AG04449 (cell line): ENCODE measurements at regions of chr7 and their contacts with region 1.

Region 1: GRCh38 chr7:139602143-139602722 is 78.7 kb downstream of the CLEC2L start:
- DNase-seq: peak; percentile 10
- H3K4me3 ChIP-seq: no peak overlapping the region
- CTCF ChIP-seq: peak; percentile 54

Region 2: GRCh38 chr7:139511315-139511714 is 90.9 kb before region 1 on chr7:
- CTCF ChIA-PET with region 1: interaction called, 14 read pairs
- POLR2A ChIA-PET with region 1: no interaction called
- DNase-seq: no peak
- H3K4me3 ChIP-seq: no peak overlapping the region
- CTCF ChIP-seq: no peak

Region 3: GRCh38 chr7:139588632-139589031 is 13.6 kb before region 1 on chr7:
- CTCF ChIA-PET with region 1: interaction called, 141 read pairs
- POLR2A ChIA-PET with region 1: no interaction called
- DNase-seq: peak; percentile 9
- H3K4me3 ChIP-seq: no peak overlapping the region
- CTCF ChIP-seq: no peak

Region 4: DNA sequence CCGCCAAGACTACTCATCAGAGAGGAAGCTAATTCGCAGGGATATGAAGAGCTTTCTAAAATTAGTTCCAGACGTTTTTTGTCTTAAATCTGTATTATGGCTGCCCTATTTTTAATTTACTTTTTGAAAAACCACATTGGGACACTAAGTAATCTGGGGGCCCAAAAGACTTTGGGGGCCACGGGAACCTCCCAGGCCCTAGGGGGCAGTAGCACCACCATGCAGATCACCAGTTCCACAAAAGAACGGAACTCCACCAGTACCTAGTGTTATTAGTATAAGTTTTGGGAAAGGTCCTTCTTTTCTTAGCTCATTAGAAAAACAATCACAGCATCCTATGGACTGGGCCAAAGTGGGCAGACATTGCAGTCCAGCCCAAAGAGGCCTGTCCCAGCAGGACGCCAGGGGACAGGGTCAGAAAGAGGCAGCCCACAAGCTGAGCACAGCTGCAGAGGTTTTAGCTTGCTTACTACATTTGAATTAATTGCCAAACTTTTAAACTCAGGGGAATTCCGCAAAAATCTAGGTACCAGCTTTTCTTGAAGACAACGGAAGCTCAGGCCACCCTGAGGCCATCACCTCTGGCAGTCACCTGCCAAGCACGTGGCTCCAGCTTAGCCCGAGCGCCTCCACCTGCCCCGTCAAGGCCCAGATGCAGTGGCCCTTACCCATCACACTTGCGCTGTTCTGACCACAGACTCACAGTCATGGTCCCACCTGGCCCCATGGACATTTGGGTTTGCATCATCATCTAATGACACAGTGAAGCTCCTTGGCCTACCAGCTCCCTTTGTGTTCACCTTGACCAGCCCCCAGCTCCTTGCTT is 385.7 kb after region 1 on chr7:
- CTCF ChIA-PET with region 1: interaction called, 16 read pairs
- POLR2A ChIA-PET with region 1: no interaction called
- DNase-seq: no peak
- H3K4me3 ChIP-seq: no peak overlapping the region
- CTCF ChIP-seq: no peak